Activated CD8-positive, alpha-beta T cell treated with anti-CD3 and anti-CD28 coated beads for 36 hours (primary cell): ENCODE measurements at regions of chr2 and their contacts with region 1.

Region 1: GRCh38 chr2:133886735-133887660 is 318.7 kb upstream of the NCKAP5 start:
- DNase-seq: peak; percentile 67
- ATAC-seq: peak; percentile 51
- H3K4me3 Mint-ChIP-seq: no peak overlapping the region
- H3K27ac Mint-ChIP-seq: no peak overlapping the region
- H3K4me1 Mint-ChIP-seq: no peaks in the 10 kb centered on the region
- H3K27me3 Mint-ChIP-seq: peaks cover 7% of the 10 kb centered on the region
- CTCF ChIP-seq: peak; percentile 51

Region 2: GRCh38 chr2:133568172-133568571 is 318.8 kb before region 1 on chr2 and contains the start of gene NCKAP5:
- CTCF ChIA-PET with region 1: no interaction called
- POLR2A ChIA-PET with region 1: no interaction called
- intact Hi-C with region 1: no loop called
- DNase-seq: no peak
- ATAC-seq: no peak
- H3K4me3 Mint-ChIP-seq: no peak within 1 kb of the TSS
- H3K27ac Mint-ChIP-seq: no peak within 1 kb of the TSS
- H3K4me1 Mint-ChIP-seq: no peaks in the 10 kb centered on the region
- H3K27me3 Mint-ChIP-seq: peaks cover 14% of the 10 kb centered on the region
- CTCF ChIP-seq: no peak
- total RNA-seq, gene NCKAP5: not detected

Region 3: GRCh38 chr2:134087371-134087921 is 200.4 kb after region 1 on chr2:
- CTCF ChIA-PET with region 1: no interaction called
- POLR2A ChIA-PET with region 1: no interaction called
- intact Hi-C with region 1: loop called (anchors 10 kb)
- DNase-seq: no peak
- ATAC-seq: no peak
- H3K4me3 Mint-ChIP-seq: no peak overlapping the region
- H3K27ac Mint-ChIP-seq: no peak overlapping the region
- H3K4me1 Mint-ChIP-seq: no peaks in the 10 kb centered on the region
- H3K27me3 Mint-ChIP-seq: peaks cover 1% of the 10 kb centered on the region
- CTCF ChIP-seq: no peak